Aorta (tissue), 5 donors: ENCODE measurements at regions of chr15 and their contacts with region 1.

Region 1: GRCh38 chr15:101294731-101295606 is at the start of gene SNRPA1:
- DNase-seq: peak; percentile 99 to 100
- ATAC-seq: peak; percentile 98
- H3K4me3 ChIP-seq: peak within 1 kb of the TSS; percentile 51 to 89
- H3K27ac ChIP-seq: peak within 1 kb of the TSS; percentile 31 to 84
- H3K4me1 ChIP-seq: no peaks in the 10 kb centered on the region
- H3K27me3 ChIP-seq: no peaks in the 10 kb centered on the region
- total RNA-seq, gene SNRPA1: 46.4 to 49.2 TPM

Region 2: DNA sequence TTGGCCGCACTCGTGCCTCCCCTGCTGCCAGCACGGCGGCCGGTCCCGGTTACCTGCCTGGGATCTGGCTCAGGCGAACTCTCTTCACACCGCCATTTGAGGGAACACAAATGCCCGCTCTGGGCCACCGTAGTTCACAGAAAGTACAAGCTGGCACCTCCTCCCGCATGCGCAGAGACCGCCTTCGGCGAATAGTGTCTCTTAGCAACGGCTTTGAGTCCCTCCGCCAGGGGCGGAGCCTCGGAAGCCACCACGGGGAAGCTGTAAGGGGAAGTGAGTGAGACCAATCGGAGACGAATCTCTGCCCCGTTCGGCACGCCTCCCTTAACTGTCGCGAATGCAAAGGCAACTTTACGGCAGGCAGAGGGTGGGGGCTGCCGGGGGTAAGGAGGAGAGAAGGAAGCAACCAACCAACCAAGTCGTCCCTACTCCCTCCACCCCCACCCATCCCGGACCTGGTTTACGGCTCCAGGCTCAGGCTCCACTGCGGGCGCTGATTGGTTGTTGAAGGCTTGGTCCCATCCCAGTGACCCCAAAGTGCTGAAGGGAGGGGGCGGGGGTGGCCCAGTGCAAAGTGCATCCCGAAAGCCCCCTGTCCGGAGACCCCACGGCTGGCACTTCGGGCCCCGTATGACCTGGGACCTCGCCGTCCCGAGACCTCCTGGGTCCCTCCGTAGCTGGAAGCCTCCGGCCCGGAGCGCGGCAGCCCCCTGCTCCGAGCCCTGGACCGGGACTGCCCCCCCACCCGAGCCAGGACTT is 692.7 kb before region 1 on chr15 and contains the starts of genes ASB7 and LINS1:
- intact Hi-C with region 1: loop called in 1 of 2 experiments (anchors 10 kb)
- DNase-seq: peak; percentile 100
- ATAC-seq: peak; percentile 99
- H3K4me3 ChIP-seq: peak within 1 kb of the TSS; percentile 58 to 82
- H3K27ac ChIP-seq: peak within 1 kb of the TSS in 1 of 2 donors; percentile 0
- H3K4me1 ChIP-seq: no peaks in the 10 kb centered on the region
- H3K27me3 ChIP-seq: no peaks in the 10 kb centered on the region
- total RNA-seq, gene ASB7: 11.0 to 11.5 TPM
- total RNA-seq, gene LINS1: 12.8 to 19.2 TPM

Region 3: GRCh38 chr15:101008158-101009139 is 286.5 kb before region 1 on chr15:
- intact Hi-C with region 1: no loop called
- DNase-seq: peak; percentile 87 to 94
- ATAC-seq: peak; percentile 91
- H3K4me3 ChIP-seq: peak overlapping the region in 1 of 2 donors; percentile 40
- H3K27ac ChIP-seq: no peak overlapping the region
- H3K4me1 ChIP-seq: no peaks in the 10 kb centered on the region
- H3K27me3 ChIP-seq: no peaks in the 10 kb centered on the region

Region 4: GRCh38 chr15:101277038-101277882 is 17.7 kb before region 1 on chr15 and contains the start of gene SELENOS:
- intact Hi-C with region 1: loop called in 1 of 2 experiments (anchors 1 kb)
- DNase-seq: peak; percentile 92 to 98
- ATAC-seq: peak; percentile 99
- H3K4me3 ChIP-seq: peak within 1 kb of the TSS; percentile 49 to 85
- H3K27ac ChIP-seq: peak within 1 kb of the TSS; percentile 54 to 84
- H3K4me1 ChIP-seq: no peaks in the 10 kb centered on the region
- H3K27me3 ChIP-seq: no peaks in the 10 kb centered on the region
- total RNA-seq, gene SELENOS: 69.0 to 74.3 TPM

Region 5: DNA sequence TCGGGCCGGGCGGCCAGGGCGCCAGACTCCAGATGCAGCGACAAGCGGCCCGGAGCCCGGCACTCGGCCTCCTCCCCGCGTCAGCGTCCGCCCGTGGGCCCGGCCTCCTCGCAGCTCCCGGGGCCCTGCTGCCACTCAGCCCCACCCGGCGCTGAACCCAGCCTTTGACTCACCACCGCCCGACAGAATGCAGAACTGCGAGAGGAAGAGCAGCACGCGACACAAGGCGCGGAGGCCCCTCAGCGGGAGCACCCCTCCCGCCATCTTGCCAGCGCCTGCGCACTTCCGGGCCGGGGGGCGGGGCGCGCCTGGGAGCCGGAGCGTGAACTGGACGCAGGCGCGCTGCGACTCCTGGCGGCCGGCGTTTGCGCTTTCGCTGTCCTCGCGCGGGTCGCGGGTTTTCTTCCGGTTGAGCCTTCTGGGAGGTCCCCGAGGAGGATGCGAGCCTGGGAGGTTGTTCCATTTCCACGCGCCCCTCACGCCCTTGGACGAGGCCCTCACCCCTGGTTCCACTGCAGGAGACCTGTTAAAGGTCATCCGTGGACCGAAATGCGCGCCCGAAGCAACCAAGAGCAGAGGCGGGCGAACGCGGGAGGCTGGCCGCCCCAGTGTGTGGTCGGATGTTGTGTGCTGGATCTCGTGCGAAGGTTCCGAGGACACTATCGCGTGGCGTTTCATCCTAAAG is 357.3 kb after region 1 on chr15 and contains the start of gene TM2D3:
- intact Hi-C with region 1: loop called (anchors 2 to 5 kb)
- DNase-seq: peak; percentile 96 to 99
- ATAC-seq: peak; percentile 99
- H3K4me3 ChIP-seq: peak within 1 kb of the TSS; percentile 68 to 78
- H3K27ac ChIP-seq: peak within 1 kb of the TSS; percentile 87 to 93
- H3K4me1 ChIP-seq: no peaks in the 10 kb centered on the region
- H3K27me3 ChIP-seq: no peaks in the 10 kb centered on the region
- total RNA-seq, gene TM2D3: 50.8 to 54.6 TPM